ENCODE measurements at regions of chr2 and their contacts with region 1.

Region 1: GRCh38 chr2:160294339-160294803 is 94.3 kb upstream of the ITGB6 start:
- DNase-seq: peak; percentile 59
- H3K4me3 Mint-ChIP-seq: no peak overlapping the region
- H3K27ac Mint-ChIP-seq: peak overlapping the region; percentile 67
- H3K4me1 Mint-ChIP-seq: peaks cover 80% of the 10 kb centered on the region
- H3K27me3 Mint-ChIP-seq: no peaks in the 10 kb centered on the region

Region 2: GRCh38 chr2:160269803-160270570 is 24.4 kb before region 1 on chr2:
- CTCF ChIA-PET with region 1: interaction called, 5 read pairs
- intact Hi-C with region 1: loop called (anchors 1 kb)
- DNase-seq: peak; percentile 64
- H3K4me3 Mint-ChIP-seq: peak overlapping the region; percentile 65
- H3K27ac Mint-ChIP-seq: peak overlapping the region; percentile 53
- H3K4me1 Mint-ChIP-seq: peaks cover 39% of the 10 kb centered on the region
- H3K27me3 Mint-ChIP-seq: no peaks in the 10 kb centered on the region

Region 3: DNA sequence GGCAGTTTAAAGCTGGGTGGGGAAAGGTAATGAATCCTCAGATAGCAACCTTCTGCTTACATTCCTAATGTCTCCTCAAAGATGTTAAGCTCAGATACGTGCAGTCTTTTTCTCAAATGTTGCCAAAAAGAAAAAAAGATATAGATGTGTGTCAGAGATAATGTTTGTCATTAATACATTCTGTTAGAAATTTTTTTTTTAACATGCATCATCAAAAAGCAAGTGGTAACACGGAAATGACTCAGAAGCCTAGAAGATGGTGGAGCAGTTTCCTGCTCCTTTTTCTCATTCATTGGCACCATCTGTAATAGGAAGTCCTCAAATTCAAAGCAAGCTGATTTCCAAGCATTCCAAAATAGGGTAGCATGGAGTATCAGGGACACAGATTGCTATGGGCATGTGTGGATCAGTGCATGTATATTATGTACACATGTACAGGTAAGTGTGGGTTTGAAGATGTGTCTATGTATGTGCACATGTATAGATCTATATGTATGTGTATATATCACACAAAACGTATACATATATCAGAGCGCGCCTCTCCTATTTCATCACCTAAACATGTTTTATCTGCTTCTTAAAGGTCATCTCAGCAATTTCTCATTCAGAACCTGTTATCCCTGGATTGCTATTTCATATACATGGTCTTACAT is 14.4 kb before region 1 on chr2:
- CTCF ChIA-PET with region 1: interaction called, 4 read pairs
- intact Hi-C with region 1: loop called (anchors 1 kb)
- DNase-seq: no peak
- H3K4me3 Mint-ChIP-seq: no peak overlapping the region
- H3K27ac Mint-ChIP-seq: peak overlapping the region; percentile 64
- H3K4me1 Mint-ChIP-seq: peaks cover 33% of the 10 kb centered on the region
- H3K27me3 Mint-ChIP-seq: no peaks in the 10 kb centered on the region

Region 4: GRCh38 chr2:160703648-160704585 is 409.5 kb after region 1 on chr2:
- CTCF ChIA-PET with region 1: no interaction called
- intact Hi-C with region 1: no loop called
- DNase-seq: peak; percentile 60
- H3K4me3 Mint-ChIP-seq: peak overlapping the region; percentile 19
- H3K27ac Mint-ChIP-seq: no peak overlapping the region
- H3K4me1 Mint-ChIP-seq: peaks cover 12% of the 10 kb centered on the region
- H3K27me3 Mint-ChIP-seq: no peaks in the 10 kb centered on the region

Measured in activated naive CD4-positive, alpha-beta T cell treated with anti-CD3 and anti-CD28 coated beads for 36 hours (primary cell).